Activated naive CD4-positive, alpha-beta T cell treated with anti-CD3 and anti-CD28 coated beads, Interleukin-2, amount 10 ng/mL, durations not matched to agents 7 days and 5 days (primary cell): ENCODE measurements at regions of chr11 and their contacts with region 1.

Region 1: GRCh38 chr11:88552377-88553062 is 215.0 kb upstream of the CTSC start:
- DNase-seq: peak; percentile 73
- H3K4me3 Mint-ChIP-seq: no peak overlapping the region
- H3K27ac Mint-ChIP-seq: no peak overlapping the region
- H3K4me1 Mint-ChIP-seq: no peaks in the 10 kb centered on the region
- H3K27me3 Mint-ChIP-seq: peaks cover 5% of the 10 kb centered on the region

Region 2: DNA sequence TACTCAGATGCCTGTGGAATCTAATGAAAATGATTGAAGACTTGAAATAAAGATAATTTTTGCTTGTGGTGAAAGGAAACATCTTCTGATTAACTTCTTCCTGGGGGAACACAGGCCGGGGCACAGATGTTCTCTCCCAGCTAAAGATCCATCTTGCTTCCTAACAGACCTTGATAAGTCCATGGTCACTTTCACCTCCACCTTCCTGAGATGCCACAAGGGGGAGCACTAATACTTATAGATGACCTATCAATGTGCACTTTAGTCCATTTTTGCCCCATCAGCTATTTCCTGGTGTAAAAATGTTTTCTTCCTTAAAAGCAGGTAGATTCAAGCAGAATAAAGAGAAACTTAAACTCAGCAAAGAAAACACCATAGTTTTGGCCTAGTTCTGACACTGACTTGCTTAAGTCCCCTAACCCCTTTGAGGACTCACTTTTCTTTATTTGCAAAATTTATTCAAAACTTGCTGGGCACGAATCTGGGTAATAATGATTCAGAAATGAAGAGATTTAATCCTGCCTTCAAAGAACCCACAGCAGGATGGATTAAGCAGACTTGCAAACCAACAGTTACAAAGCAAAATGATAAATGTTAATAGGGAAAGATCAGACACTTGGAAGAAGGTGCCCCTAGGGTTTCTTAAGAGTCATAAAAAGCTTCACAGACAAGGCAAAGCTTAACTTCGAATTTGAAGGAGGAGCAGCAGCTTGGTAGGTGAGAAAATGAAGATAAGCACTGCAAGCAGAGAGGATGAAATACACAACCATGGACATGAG is 535.9 kb before region 1 on chr11:
- CTCF ChIA-PET with region 1: interaction called, 38 read pairs
- DNase-seq: peak; percentile 71
- H3K4me3 Mint-ChIP-seq: no peak overlapping the region
- H3K27ac Mint-ChIP-seq: no peak overlapping the region
- H3K4me1 Mint-ChIP-seq: no peaks in the 10 kb centered on the region
- H3K27me3 Mint-ChIP-seq: no peaks in the 10 kb centered on the region

Region 3: GRCh38 chr11:88231894-88232482 is 320.5 kb before region 1 on chr11:
- CTCF ChIA-PET with region 1: interaction called, 16 read pairs
- DNase-seq: peak; percentile 21
- H3K4me3 Mint-ChIP-seq: no peak overlapping the region
- H3K27ac Mint-ChIP-seq: no peak overlapping the region
- H3K4me1 Mint-ChIP-seq: no peaks in the 10 kb centered on the region
- H3K27me3 Mint-ChIP-seq: no peaks in the 10 kb centered on the region

Region 4: DNA sequence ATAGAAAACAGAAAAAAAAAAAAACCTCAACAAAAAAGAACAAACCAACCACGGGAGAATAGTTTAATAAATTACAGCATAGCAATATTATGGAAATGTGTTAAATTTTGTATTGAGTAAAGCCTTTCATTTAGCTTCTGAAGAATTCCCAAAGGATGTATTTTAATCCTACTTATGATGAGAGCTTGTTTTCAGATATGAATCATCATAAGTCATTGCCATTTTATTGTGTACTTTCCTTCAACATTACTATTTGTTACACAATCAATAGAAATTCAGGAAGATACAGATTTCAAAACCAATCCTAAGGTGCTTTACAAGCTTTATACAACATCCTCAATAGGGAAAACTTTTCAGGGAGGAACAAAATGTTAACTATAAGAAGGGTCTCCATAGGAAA is 14.4 kb before region 1 on chr11:
- CTCF ChIA-PET with region 1: interaction called, 10 read pairs
- DNase-seq: no peak
- H3K4me3 Mint-ChIP-seq: no peak overlapping the region
- H3K27ac Mint-ChIP-seq: no peak overlapping the region
- H3K4me1 Mint-ChIP-seq: no peaks in the 10 kb centered on the region
- H3K27me3 Mint-ChIP-seq: peaks cover 4% of the 10 kb centered on the region